ENCODE measurements at regions of chr9 and their contacts with region 1.

Region 1: DNA sequence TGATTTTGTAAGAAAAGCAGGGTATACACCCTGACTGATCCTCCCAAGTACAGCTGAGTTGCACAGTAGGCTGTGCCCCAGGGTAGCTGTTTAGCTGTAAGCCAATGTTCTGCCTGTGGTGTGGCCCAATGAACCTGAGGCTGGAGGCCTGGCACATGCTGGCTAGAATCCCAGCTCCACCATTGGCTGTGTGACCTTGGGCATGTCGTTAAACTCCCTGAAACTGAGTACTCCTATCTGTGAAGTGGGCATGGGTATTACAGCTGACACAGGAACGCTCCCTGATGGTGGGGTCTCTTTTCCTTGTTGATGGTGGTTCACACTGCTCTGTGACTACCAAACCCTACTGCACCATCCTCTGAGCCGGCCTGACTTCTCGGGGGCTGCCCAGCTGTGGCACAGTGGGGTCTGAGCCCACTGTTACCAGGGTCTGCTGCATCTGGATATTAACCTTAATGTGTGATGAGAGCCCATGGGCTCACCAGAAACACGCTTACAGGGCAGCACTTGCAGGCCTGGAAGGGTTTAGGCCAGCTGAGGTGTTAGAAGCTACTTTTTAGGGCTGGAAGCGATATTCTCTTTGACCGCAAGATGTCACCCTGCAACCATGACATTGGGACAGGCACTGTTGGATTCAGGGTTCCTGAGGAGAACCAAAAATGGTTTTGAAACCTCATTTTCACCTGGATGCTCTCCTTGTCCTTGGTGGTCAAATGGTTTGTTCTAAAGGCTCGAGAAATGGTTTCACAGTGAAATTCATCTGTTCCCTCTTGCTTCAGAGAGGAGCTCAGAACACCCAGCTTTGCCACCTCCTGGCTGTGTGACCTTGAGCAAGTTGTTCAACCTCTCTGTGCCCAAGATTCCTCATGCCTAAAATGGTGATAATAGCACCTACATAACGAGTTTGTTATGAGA is 6.8 kb upstream of the GADD45G start:
- DNase-seq: peak; percentile 72
- ATAC-seq: peak; percentile 45
- H3K4me3 Mint-ChIP-seq: no peak overlapping the region
- H3K27ac Mint-ChIP-seq: no peak overlapping the region
- H3K4me1 Mint-ChIP-seq: peaks cover 4% of the 10 kb centered on the region
- H3K27me3 Mint-ChIP-seq: peaks cover 31% of the 10 kb centered on the region

Region 2: DNA sequence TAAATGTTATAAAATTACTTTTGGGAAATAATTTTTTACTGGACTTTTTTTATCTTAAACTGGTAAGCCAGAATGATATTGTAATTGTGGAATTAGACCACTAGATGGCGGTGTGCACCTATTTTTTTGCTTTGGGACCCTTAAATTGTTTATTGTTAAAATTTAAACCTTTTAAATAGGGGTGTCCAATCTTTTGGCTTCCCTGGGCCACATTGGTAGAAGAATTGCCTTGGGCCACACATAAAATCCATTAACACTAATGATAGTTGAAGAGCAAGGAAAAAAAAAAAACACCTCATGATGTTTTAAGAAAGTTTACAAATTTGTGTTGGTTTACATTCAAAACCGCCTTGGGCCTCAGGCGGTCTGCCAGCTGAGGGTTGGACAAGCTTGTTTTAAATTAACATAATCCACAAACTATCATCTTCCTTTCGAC is 21.5 kb before region 1 on chr9:
- CTCF ChIA-PET with region 1: interaction called, 38 read pairs
- POLR2A ChIA-PET with region 1: interaction called, 3 read pairs
- DNase-seq: peak; percentile 54
- ATAC-seq: no peak
- H3K4me3 Mint-ChIP-seq: no peak overlapping the region
- H3K27ac Mint-ChIP-seq: no peak overlapping the region
- H3K4me1 Mint-ChIP-seq: peaks cover 36% of the 10 kb centered on the region
- H3K27me3 Mint-ChIP-seq: peaks cover 34% of the 10 kb centered on the region

Region 3: DNA sequence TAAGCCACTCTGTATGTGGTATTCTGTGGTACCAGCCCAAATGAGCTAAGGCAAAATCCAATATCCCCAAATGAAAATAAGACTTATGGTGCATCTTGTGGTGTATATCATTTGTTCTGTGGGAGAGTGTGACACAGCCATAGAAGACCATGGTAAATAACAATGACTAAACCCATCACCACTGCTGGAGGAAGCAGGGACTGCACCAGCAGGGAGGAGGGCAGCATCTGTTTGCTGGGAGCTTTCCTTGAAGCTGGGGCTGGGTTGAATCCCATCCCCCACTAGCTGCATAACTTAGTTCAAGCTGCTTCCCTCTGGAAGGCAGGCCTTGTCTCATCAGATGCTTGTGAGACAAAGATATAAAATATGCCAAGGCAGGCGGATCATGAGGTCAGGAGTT is 21.1 kb after region 1 on chr9:
- CTCF ChIA-PET with region 1: interaction called, 12 read pairs
- POLR2A ChIA-PET with region 1: no interaction called
- DNase-seq: no peak
- ATAC-seq: no peak
- H3K4me3 Mint-ChIP-seq: no peak overlapping the region
- H3K27ac Mint-ChIP-seq: no peak overlapping the region
- H3K4me1 Mint-ChIP-seq: peaks cover 12% of the 10 kb centered on the region
- H3K27me3 Mint-ChIP-seq: no peaks in the 10 kb centered on the region

Region 4: DNA sequence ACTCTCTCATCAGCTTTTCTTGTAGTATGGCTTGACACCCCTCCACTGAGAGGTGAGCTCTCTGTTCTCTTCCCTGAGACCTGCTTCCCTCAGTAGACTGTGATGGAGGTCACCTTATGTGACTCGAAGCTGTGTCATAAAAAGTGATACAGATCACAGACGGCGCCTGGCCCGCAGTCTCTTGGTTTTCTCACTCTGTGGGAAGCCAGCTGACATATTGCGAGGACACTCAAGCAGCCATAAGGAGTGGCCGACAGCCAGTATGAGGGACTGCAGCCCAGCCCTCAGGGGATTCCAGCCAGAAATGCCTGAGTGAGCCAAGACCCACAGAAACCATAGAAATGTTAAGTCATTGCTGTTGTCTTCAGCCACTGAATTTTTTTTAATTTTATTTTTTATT is 44.8 kb after region 1 on chr9:
- CTCF ChIA-PET with region 1: no interaction called
- POLR2A ChIA-PET with region 1: no interaction called
- DNase-seq: no peak
- ATAC-seq: no peak
- H3K4me3 Mint-ChIP-seq: no peak overlapping the region
- H3K27ac Mint-ChIP-seq: no peak overlapping the region
- H3K4me1 Mint-ChIP-seq: peaks cover 6% of the 10 kb centered on the region
- H3K27me3 Mint-ChIP-seq: peaks cover 14% of the 10 kb centered on the region

Region 5: GRCh38 chr9:89919169-89919681 is 321.3 kb after region 1 on chr9:
- CTCF ChIA-PET with region 1: interaction called, 106 read pairs
- POLR2A ChIA-PET with region 1: interaction called, 3 read pairs
- DNase-seq: peak; percentile 67
- ATAC-seq: peak; percentile 88
- H3K4me3 Mint-ChIP-seq: no peak overlapping the region
- H3K27ac Mint-ChIP-seq: no peak overlapping the region
- H3K4me1 Mint-ChIP-seq: peaks cover 11% of the 10 kb centered on the region
- H3K27me3 Mint-ChIP-seq: peaks cover 28% of the 10 kb centered on the region

Region 6: DNA sequence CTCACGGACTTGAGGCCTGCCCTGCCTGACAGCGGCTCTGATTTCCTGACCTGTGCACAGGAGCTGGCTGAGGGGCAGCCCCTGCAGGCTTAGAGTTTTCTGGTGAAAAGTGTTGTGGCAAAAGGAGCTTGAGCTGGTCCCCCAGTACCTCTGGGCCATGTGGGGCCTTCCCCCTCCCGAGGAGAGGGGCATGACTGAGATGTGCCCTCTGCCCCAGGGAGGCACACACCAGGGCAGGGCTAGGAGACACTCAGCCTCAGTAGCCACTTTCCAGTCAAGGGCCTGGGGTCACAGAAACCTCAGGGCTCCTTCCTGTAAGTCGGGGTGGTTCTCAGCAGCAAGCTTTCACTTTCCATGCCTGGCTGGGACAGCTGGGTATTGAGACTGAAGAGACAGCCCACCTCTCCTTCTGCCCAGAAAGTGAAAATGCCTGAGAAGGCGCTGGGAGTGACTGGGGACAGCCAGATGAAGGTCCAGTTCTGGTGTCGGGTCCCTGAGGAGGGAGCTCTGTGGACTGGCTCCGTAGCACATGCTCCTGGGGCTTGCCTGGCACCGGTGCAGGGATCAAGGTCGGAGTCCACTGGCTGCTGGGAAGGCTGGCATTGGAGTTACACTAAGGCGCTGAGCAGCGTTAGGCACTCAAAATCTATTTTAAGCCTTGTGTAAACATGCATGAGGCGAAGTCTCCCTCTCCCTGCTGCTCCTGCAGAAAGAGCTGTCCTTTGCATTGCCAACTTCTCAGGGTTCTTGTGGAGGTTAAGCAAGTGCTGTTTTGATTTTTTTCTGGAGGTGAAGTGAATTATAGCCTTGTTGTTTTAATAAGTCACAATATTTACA is 401.8 kb after region 1 on chr9:
- CTCF ChIA-PET with region 1: interaction called, 34 read pairs
- POLR2A ChIA-PET with region 1: no interaction called
- DNase-seq: peak; percentile 86
- ATAC-seq: peak; percentile 94
- H3K4me3 Mint-ChIP-seq: peak overlapping the region; percentile 74
- H3K27ac Mint-ChIP-seq: peak overlapping the region; percentile 92
- H3K4me1 Mint-ChIP-seq: peaks cover 47% of the 10 kb centered on the region
- H3K27me3 Mint-ChIP-seq: peaks cover 2% of the 10 kb centered on the region

Region 7: DNA sequence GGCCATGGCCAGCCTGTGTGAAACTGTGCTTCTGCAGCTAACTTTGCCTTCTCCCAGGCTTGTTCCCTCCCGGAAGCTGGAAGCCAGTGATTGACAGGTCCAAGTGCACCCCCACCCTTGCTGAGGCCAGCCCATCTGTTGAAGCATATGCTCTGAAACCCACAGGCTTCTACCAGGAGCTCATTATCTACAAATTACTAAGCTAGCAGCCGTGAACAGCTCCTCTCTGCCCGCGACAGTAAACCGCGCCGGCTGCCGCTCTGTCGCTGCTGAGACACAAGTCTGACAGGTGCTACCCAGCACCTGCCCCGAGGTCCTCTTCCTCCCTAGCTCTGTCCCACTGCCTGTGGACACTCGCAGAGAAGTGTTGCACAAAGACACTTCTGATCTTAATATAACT is 497.7 kb after region 1 on chr9:
- CTCF ChIA-PET with region 1: interaction called, 287 read pairs
- POLR2A ChIA-PET with region 1: interaction called, 4 read pairs
- DNase-seq: no peak
- ATAC-seq: peak; percentile 48
- H3K4me3 Mint-ChIP-seq: no peak overlapping the region
- H3K27ac Mint-ChIP-seq: no peak overlapping the region
- H3K4me1 Mint-ChIP-seq: peaks cover 27% of the 10 kb centered on the region
- H3K27me3 Mint-ChIP-seq: peaks cover 38% of the 10 kb centered on the region

Region 8: DNA sequence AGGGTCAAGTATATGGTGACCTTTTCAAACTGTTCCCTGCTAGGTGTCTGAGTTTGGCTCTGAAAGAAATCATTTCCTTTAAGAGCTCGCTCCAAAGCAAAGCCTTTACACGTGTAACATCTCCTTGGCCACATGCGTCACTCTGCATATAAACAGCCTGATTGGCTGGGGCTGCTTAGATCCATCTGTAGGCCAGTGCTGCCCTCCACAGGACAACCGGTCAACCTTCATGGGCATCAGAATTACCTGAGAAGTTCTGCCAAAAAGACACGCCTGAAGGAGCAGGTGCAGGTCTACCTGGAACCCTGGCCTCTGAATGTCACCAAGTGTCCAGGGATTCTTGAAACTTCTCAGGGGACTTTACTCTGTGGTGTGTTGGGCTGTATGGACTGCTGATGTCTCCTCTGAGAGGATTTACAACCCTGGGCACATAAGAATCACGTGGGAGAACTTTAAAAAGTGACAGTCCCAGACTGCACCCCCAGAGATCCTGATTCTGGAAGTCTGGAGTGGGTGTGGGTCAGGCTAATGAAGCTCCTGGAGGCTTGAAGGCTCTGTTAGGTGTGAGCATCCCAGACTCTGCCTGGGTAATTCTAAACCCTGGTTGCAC is 504.4 kb after region 1 on chr9:
- CTCF ChIA-PET with region 1: interaction called, 287 read pairs
- POLR2A ChIA-PET with region 1: interaction called, 4 read pairs
- DNase-seq: peak; percentile 87
- ATAC-seq: peak; percentile 98
- H3K4me3 Mint-ChIP-seq: no peak overlapping the region
- H3K27ac Mint-ChIP-seq: no peak overlapping the region
- H3K4me1 Mint-ChIP-seq: peaks cover 20% of the 10 kb centered on the region
- H3K27me3 Mint-ChIP-seq: peaks cover 11% of the 10 kb centered on the region

Measured in activated CD8-positive, alpha-beta T cell treated with anti-CD3 and anti-CD28 coated beads, Interleukin-2, amount 10 ng/mL, durations not matched to agents 7 days and 5 days (primary cell).